ENCODE measurements at regions of chr11 and their contacts with region 1.

Region 1: DNA sequence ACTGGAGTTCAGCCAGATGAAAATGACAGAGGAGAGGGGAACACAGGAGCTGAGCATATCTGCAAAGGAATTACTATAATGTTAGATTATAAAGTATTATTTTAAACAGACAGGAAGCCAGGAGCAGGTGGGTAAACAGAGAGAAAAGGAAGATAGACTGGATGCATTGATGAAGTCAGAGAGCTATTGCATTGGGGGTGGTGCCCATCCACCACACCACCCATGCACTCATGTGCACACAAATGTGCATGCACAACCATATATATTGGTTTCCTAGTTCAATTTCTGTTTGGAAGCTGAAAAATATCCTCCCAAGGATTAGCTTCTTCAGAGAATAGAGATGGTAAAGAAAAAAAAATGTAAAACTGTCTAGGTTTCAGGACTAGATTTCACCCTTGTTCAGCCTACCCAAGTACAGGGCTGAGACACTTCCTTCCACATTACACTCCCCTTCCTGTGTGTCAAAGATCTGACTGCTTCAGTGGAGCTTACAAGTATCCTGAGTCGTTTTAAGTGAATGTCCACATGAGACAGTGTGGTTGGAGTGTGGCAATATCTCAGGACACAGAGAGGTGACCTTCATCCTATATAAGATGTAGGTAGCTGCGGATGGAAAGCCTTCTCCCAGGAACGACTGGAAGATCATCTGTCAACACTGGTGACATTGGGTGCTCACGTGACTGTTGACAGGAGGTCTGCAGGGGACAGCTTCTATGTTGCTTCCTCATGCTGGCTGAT is 12.2 kb upstream of the SMPD1 start:
- DNase-seq: no peak
- H3K4me3 ChIP-seq: no peak overlapping the region
- H3K4me3 Mint-ChIP-seq: no peak overlapping the region
- H3K27ac Mint-ChIP-seq: no peak overlapping the region
- H3K4me1 ChIP-seq: peaks cover 8% of the 10 kb centered on the region
- H3K4me1 Mint-ChIP-seq: peaks cover 7% of the 10 kb centered on the region
- H3K27me3 ChIP-seq: no peaks in the 10 kb centered on the region
- H3K27me3 Mint-ChIP-seq: no peaks in the 10 kb centered on the region
- CTCF ChIP-seq: no peak

Region 2: DNA sequence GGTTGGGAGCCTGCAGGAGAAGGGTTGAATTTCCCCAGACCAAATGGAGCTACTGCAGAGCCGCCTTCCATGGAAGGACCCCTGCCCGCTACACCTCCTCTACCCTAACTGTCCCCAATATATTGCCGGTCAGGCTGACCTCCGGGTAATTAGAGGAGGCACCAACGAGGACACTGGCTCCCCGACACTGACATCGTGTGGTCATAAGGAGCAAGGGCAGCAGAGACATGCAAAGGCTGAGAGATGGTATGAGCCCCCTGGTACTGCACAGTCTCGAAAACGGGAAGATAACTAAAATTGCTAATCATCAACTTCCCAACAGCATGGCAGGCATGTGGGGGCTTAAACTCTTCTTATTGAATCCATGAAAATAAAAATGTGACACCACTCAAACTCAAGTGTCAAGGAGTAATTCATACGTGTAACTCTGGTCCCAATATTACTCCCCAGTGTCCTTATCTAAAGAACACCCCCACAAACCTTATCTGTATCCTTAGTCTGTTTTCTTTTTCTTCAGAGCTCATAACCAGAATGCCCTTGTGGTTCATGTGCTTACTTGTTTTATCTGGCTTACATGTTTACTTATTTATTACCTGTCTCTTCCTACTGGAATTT is 62.2 kb before region 1 on chr11:
- CTCF ChIA-PET with region 1: no interaction called
- POLR2A ChIA-PET with region 1: no interaction called
- intact Hi-C with region 1: no loop called
- DNase-seq: peak; percentile 61 to 68
- H3K4me3 ChIP-seq: no peak overlapping the region
- H3K4me3 Mint-ChIP-seq: no peak overlapping the region
- H3K27ac Mint-ChIP-seq: no peak overlapping the region
- H3K4me1 ChIP-seq: 0 out of 2 replicates have a peak, but pooled peaks cover 6% of the 10 kb centered on the region
- H3K4me1 Mint-ChIP-seq: peaks cover 9% of the 10 kb centered on the region
- H3K27me3 ChIP-seq: no peaks in the 10 kb centered on the region
- H3K27me3 Mint-ChIP-seq: peaks cover 4% of the 10 kb centered on the region
- CTCF ChIP-seq: peak; percentile 86 to 96

Region 3: DNA sequence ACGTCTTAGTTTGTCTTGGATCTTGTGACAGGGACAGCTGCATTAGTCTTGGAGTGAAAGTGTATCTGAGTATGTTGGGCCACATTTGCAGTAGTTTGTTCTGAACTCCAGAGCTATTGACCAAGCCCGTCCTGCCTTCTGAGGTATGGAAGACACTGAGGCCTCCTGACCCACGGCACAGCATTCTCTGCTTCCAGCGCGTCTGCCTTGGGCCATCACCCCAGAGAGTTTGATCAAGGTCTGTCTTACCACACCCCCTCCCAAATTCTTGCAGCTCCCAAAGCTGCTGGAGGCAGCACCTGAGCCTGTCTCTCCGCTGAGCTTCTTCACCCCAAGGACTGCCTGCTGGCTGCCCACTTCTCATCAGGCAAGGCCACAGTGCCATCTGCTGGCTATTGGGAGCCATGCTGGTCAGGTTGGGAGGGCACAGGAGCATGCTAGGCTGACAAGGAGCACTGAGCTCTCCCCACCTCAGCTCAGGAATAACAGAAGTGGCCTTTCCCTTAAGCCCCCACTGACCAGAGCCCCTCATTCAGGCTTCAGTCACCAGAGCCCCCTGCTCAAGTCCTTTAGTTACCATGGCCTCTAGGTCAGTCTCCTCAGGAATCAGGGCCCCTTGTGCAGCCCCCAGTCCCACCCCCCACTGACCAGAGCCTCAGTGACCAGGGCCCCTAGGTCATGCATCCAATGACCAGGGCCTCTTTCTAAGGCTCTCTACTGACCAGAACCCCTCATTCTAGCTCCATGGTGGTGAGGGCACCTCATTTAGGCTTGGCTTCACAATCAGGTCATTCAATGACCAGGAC is 15.0 kb before region 1 on chr11:
- CTCF ChIA-PET with region 1: interaction called, 38 read pairs
- POLR2A ChIA-PET with region 1: no interaction called
- intact Hi-C with region 1: no loop called
- DNase-seq: peak; percentile 86 to 87
- H3K4me3 ChIP-seq: no peak overlapping the region
- H3K4me3 Mint-ChIP-seq: no peak overlapping the region
- H3K27ac Mint-ChIP-seq: no peak overlapping the region
- H3K4me1 ChIP-seq: peaks cover 16% of the 10 kb centered on the region; the same call in 1 of the 2 replicates
- H3K4me1 Mint-ChIP-seq: no peaks in the 10 kb centered on the region
- H3K27me3 ChIP-seq: no peaks in the 10 kb centered on the region
- H3K27me3 Mint-ChIP-seq: no peaks in the 10 kb centered on the region
- CTCF ChIP-seq: peak; percentile 79 to 97

Region 4: GRCh38 chr11:6419009-6419631 is 41.0 kb after region 1 on chr11 and contains the start of gene APBB1:
- CTCF ChIA-PET with region 1: interaction called, 22 read pairs
- POLR2A ChIA-PET with region 1: interaction called, 8 read pairs
- intact Hi-C with region 1: no loop called
- DNase-seq: peak in 1 of 2 experiments; percentile 75
- H3K4me3 ChIP-seq: peak within 1 kb of the TSS; percentile 81
- H3K4me3 Mint-ChIP-seq: no peak within 1 kb of the TSS
- H3K27ac Mint-ChIP-seq: no peak within 1 kb of the TSS
- H3K4me1 ChIP-seq: peaks cover 14% of the 10 kb centered on the region
- H3K4me1 Mint-ChIP-seq: no peaks in the 10 kb centered on the region
- H3K27me3 ChIP-seq: no peaks in the 10 kb centered on the region
- H3K27me3 Mint-ChIP-seq: peaks cover 2% of the 10 kb centered on the region
- CTCF ChIP-seq: peak in 1 of 2 experiments; percentile 13
- total RNA-seq, gene APBB1: 37.8 and 39.0 TPM in 2 replicates

Region 5: DNA sequence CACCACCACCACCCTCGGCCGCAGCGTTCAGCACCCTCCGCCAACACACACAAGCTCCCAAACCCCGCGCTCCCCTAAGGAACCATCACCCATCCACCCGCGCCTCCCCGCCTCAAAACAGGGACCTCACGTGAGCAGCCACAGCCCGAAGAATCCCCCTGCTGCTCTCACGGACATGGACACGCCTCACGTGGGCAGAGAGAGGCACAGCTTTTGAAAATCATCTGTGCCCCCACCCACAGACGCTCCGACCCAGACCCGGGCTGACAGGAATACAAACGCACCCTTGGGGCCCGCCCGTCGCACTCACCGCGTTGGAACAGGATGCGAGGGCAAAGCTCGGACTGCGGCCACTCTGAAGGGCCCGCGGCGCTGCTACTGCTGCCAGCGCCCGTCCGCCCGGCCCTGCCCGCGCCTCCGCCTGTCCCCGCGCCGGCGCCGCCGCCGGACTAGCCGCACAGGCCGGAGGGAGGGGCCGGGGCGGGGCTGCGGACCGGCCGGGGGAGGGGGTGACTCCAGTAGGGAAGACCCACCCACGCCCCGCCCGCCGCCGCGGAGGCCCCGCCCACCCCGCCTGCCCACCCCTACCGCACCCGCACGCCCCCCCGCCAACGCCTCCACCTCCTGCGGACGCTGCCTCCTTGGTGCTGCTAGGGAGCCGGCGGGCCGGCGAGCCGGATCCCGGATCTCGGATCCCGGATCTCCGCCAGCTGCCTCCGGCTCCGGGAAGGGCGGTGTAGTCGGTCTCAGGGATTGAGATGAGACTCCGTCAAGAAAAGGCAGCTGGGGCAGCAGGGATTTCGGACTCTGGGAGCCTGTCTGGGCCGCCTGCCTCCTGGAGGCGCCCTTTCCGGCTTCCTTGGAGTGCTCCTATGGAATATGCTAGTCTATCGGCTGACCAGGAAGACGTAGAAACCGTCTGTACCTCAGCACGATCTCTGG is 95.7 kb after region 1 on chr11 and contains the start of gene TRIM3:
- CTCF ChIA-PET with region 1: interaction called, 19 read pairs
- POLR2A ChIA-PET with region 1: interaction called, 6 read pairs
- intact Hi-C with region 1: no loop called
- DNase-seq: peak; percentile 92 to 94
- H3K4me3 ChIP-seq: peak within 1 kb of the TSS; percentile 65
- H3K4me3 Mint-ChIP-seq: peak within 1 kb of the TSS; percentile 84
- H3K27ac Mint-ChIP-seq: peak within 1 kb of the TSS; percentile 96
- H3K4me1 ChIP-seq: peaks cover 30% of the 10 kb centered on the region
- H3K4me1 Mint-ChIP-seq: peaks cover 29% of the 10 kb centered on the region
- H3K27me3 ChIP-seq: no peaks in the 10 kb centered on the region
- H3K27me3 Mint-ChIP-seq: no peaks in the 10 kb centered on the region
- CTCF ChIP-seq: peak in 1 of 2 experiments; percentile 39
- total RNA-seq, gene TRIM3: 28.0 and 33.4 TPM in 2 replicates

Region 6: DNA sequence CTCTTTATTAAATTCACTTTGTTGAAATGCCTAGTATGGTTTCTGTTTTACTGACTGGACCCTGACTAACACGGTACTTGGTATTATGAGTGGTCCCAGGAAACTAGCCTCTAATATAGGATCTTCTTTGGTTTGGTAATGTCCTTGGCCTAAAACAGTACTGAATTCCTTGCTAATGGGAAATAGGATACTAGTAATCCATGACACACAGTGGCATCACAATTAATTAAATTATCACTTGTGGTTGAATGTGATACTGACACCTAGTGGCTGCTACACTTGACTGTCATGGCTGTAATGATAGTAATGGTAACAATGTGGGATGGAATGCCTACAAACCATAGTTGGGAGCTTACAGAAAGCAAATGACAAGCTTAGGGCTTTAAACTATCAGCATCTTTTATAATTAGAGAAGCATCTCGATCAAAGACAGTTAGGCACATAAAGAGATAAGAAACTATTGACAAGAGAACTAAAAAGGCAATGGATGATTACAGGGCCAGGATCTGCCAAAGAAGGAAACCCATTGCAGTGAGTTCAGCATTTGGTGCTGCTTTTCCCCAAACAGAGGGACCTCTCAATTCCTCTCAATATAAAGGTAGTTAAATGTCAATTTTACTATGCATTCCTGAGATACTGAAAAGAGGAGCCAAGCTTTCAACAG is 127.6 kb after region 1 on chr11:
- CTCF ChIA-PET with region 1: interaction called, 52 read pairs
- POLR2A ChIA-PET with region 1: no interaction called
- intact Hi-C with region 1: loop called (anchors 1 kb)
- DNase-seq: peak in 1 of 2 experiments; percentile 48
- H3K4me3 ChIP-seq: no peak overlapping the region
- H3K4me3 Mint-ChIP-seq: no peak overlapping the region
- H3K27ac Mint-ChIP-seq: no peak overlapping the region
- H3K4me1 ChIP-seq: no peaks in the 10 kb centered on the region
- H3K4me1 Mint-ChIP-seq: peaks cover 5% of the 10 kb centered on the region
- H3K27me3 ChIP-seq: no peaks in the 10 kb centered on the region
- H3K27me3 Mint-ChIP-seq: no peaks in the 10 kb centered on the region
- CTCF ChIP-seq: peak; percentile 83 to 84

Region 7: GRCh38 chr11:6667733-6668374 is 289.8 kb after region 1 on chr11:
- CTCF ChIA-PET with region 1: interaction called, 9 read pairs
- POLR2A ChIA-PET with region 1: no interaction called
- intact Hi-C with region 1: loop called (anchors 1 kb)
- DNase-seq: peak in 1 of 2 experiments; percentile 45
- H3K4me3 ChIP-seq: no peak overlapping the region
- H3K4me3 Mint-ChIP-seq: no peak overlapping the region
- H3K27ac Mint-ChIP-seq: no peak overlapping the region
- H3K4me1 ChIP-seq: no peaks in the 10 kb centered on the region
- H3K4me1 Mint-ChIP-seq: no peaks in the 10 kb centered on the region
- H3K27me3 ChIP-seq: no peaks in the 10 kb centered on the region
- H3K27me3 Mint-ChIP-seq: peaks cover 15% of the 10 kb centered on the region
- CTCF ChIP-seq: peak; percentile 62 to 64